ENCODE measurements at regions of chr10 and their contacts with region 1.

Region 1: GRCh38 chr10:69229622-69229928 is 9.4 kb downstream of the HKDC1 start:
- DNase-seq: no peak
- H3K4me3 Mint-ChIP-seq: peak overlapping the region; percentile 76
- H3K27ac Mint-ChIP-seq: peak overlapping the region; percentile 98
- H3K4me1 Mint-ChIP-seq: peaks cover 86% of the 10 kb centered on the region
- H3K27me3 Mint-ChIP-seq: peaks cover 3% of the 10 kb centered on the region

Region 2: DNA sequence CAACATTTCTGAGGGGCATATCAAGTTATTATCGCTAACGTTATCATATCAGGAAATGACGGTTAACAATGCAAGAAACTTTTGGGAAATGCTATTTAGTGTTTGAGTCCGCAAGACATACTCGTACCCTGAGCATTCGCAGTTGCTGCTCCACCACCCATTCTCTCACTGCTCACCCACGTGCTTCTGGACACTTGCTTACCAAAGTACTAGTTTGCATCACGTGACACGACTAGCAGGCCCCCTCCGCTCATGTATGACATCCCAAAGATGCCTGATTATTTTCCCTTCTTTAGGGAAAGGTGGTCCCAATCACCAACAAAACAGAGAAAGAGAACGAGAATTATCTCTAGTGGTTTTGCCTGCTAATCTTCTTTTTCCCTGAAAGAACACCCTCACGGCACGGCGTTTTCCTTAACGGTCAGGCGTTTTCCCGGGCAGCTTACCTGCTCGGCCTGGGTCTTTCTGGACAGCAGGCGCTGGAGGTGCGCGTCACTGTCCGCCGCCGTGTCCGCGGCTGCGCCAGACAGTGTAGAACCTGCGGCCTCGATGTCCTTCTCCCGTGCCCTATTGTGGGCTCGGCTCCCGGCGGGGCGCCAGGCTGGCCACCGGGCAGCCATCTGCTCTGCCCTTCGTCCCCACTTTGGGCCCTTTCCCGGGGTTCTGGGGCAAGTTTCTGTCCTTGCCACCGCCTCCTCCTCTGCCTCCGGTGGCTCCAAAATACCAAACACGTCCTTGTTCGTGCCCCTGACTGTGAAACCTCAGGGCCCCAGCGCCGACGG is 49.6 kb before region 1 on chr10 and contains the start of gene SUPV3L1:
- CTCF ChIA-PET with region 1: interaction called, 4 read pairs
- POLR2A ChIA-PET with region 1: interaction called, 12 read pairs
- DNase-seq: peak; percentile 87
- H3K4me3 Mint-ChIP-seq: peak within 1 kb of the TSS; percentile 92
- H3K27ac Mint-ChIP-seq: peak within 1 kb of the TSS; percentile 98
- H3K4me1 Mint-ChIP-seq: peaks cover 45% of the 10 kb centered on the region
- H3K27me3 Mint-ChIP-seq: no peaks in the 10 kb centered on the region
- total RNA-seq, gene SUPV3L1: 34.6 to 39.1 TPM

Region 3: DNA sequence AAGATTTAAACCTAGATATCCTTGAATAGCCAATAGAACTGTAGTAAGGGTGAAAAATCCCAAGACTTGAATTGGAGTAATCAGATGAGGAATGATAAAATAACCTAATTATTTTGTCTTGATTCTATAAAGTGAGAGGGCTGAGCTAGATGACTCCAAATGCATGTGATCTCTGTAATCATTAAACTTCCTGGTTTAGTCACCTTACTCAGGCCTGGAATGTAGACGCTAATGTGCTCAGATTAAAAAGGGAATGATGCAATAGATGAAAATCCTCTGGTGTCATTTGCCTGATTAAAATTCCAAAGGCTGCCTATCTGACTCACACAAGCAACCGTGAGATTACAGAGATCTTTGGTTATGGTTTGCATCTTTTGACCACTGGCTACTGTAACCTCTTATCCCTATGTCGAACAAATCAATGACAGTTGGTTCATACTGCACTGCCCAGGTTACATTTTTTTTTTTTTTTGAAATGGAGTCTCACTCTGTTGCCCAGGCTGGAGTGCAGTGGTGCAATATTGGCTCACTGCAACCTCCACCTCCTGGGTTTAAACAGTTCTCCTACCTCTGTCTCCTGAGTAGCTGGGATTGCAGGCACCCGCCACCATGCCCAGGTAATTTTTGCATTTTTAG is 12.3 kb before region 1 on chr10:
- CTCF ChIA-PET with region 1: interaction called, 15 read pairs
- POLR2A ChIA-PET with region 1: interaction called, 28 read pairs
- DNase-seq: no peak
- H3K4me3 Mint-ChIP-seq: no peak overlapping the region
- H3K27ac Mint-ChIP-seq: no peak overlapping the region
- H3K4me1 Mint-ChIP-seq: peaks cover 64% of the 10 kb centered on the region
- H3K27me3 Mint-ChIP-seq: no peaks in the 10 kb centered on the region

Region 4: GRCh38 chr10:69392481-69393000 is 163.0 kb after region 1 on chr10:
- CTCF ChIA-PET with region 1: interaction called, 101 read pairs
- POLR2A ChIA-PET with region 1: interaction called, 4 read pairs
- DNase-seq: peak; percentile 88
- H3K4me3 Mint-ChIP-seq: no peak overlapping the region
- H3K27ac Mint-ChIP-seq: peak overlapping the region; percentile 67
- H3K4me1 Mint-ChIP-seq: peaks cover 32% of the 10 kb centered on the region
- H3K27me3 Mint-ChIP-seq: no peaks in the 10 kb centered on the region

Measured in activated CD4-positive, alpha-beta memory T cell treated with anti-CD3 and anti-CD28 coated beads, Interleukin-2, amount 10 ng/mL, durations not matched to agents 7 days and 5 days (primary cell).